Activated T-helper 1 cell treated with anti-CD3 and anti-CD28 coated beads, Interleukin-12 subunit alpha, Interleukin-12 subunit beta, Interleukin-2, Interleukin-4 antibody, amounts not matched to agents 30 ng/mL and 10 ng/mL and 1 ng/mL, durations not matched to agents 14 hours and 24 hours and 36 hours (primary cell): ENCODE measurements at regions of chr2 and their contacts with region 1.

Region 1: DNA sequence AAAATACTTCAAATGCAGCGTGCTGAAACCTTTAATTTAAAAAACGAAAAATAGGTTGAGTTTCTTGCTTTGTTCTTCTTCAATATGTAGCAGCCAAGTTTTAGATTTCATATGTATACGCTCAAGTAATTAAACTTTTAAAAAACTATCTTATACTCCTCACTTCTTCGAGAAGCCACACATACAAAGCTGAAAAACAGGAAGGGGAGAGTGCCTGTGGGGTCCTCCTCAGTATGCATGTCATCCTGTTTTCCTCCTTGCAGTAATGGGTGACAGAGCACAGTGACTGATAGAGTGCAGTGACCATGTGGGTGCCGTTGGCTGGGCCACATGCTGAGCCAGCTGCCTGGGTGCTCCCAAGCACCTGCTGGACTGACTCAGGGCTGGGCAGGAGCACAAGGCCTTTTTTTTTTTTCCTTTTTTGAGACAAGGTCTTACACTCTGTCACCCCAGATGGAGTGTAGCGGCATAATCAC is 33.3 kb downstream of the UXS1 start:
- DNase-seq: peak; percentile 22
- H3K4me3 Mint-ChIP-seq: peak overlapping the region; percentile 85
- H3K27ac Mint-ChIP-seq: peak overlapping the region; percentile 91
- H3K4me1 Mint-ChIP-seq: peaks cover 74% of the 10 kb centered on the region
- H3K27me3 Mint-ChIP-seq: no peaks in the 10 kb centered on the region

Region 2: GRCh38 chr2:106104332-106105062 is 56.3 kb before region 1 on chr2:
- intact Hi-C with region 1: loop called (anchors 1 kb)
- DNase-seq: peak; percentile 62
- H3K4me3 Mint-ChIP-seq: no peak overlapping the region
- H3K27ac Mint-ChIP-seq: peak overlapping the region; percentile 18
- H3K4me1 Mint-ChIP-seq: peaks cover 16% of the 10 kb centered on the region
- H3K27me3 Mint-ChIP-seq: no peaks in the 10 kb centered on the region

Region 3: GRCh38 chr2:106124905-106125405 is 35.9 kb before region 1 on chr2:
- intact Hi-C with region 1: loop called (anchors 5 kb)
- DNase-seq: no peak
- H3K4me3 Mint-ChIP-seq: no peak overlapping the region
- H3K27ac Mint-ChIP-seq: no peak overlapping the region
- H3K4me1 Mint-ChIP-seq: peaks cover 29% of the 10 kb centered on the region
- H3K27me3 Mint-ChIP-seq: no peaks in the 10 kb centered on the region

Region 4: GRCh38 chr2:106140913-106141312 is 19.9 kb before region 1 on chr2:
- intact Hi-C with region 1: loop called (anchors 1 kb)
- DNase-seq: no peak
- H3K4me3 Mint-ChIP-seq: peak overlapping the region; percentile 5
- H3K27ac Mint-ChIP-seq: peak overlapping the region; percentile 81
- H3K4me1 Mint-ChIP-seq: peaks cover 70% of the 10 kb centered on the region
- H3K27me3 Mint-ChIP-seq: no peaks in the 10 kb centered on the region

Region 5: DNA sequence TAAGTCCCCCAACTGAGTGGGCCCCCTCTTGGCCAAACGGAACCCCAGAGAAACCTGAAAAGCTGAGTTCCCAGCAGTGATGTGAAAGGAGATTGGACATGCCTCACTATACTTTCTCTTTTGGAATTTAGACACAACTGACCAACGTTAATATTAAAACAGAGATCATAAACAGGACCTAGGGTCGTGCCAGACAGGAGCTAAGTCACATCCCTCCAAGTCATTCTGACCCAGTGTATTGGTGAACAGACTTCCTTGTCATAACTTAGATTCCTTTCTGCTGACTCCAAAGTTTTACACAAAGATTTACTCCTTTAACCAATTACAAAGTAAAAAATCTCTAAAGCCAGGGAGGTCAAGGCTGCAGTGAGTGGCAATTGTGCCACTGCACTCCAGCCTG is 13.7 kb before region 1 on chr2:
- intact Hi-C with region 1: loop called (anchors 2 kb)
- DNase-seq: no peak
- H3K4me3 Mint-ChIP-seq: no peak overlapping the region
- H3K27ac Mint-ChIP-seq: peak overlapping the region; percentile 8
- H3K4me1 Mint-ChIP-seq: peaks cover 47% of the 10 kb centered on the region
- H3K27me3 Mint-ChIP-seq: no peaks in the 10 kb centered on the region

Region 6: DNA sequence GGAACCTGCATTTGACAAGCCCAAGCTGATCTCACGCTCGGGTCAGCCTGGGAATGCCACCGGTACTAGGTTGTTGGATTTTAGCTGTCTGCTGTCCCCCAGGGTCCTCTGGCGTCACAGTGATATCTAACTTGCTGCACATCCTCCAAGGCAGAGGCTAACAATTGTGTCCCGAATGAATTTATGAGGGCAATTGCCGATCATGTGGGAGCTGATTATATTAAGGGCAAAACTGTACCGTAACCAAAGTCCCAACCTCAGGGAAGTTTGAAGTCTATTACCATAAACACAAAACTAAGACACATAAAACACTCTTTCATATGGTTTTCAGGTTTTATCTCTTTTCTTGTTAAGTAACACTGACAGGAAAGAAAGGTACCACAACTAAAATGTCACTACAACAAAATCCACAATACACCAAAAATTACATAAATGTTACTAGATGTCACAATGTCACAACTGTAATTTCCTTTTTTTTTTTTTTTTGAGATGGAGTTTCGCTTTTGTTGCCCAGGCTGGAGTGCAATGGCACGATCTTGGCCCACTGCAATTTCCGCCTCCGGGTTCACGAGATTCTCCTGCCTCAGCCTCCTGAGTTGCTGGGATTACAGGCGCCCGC is 26.6 kb after region 1 on chr2:
- intact Hi-C with region 1: no loop called
- DNase-seq: no peak
- H3K4me3 Mint-ChIP-seq: no peak overlapping the region
- H3K27ac Mint-ChIP-seq: no peak overlapping the region
- H3K4me1 Mint-ChIP-seq: peaks cover 62% of the 10 kb centered on the region
- H3K27me3 Mint-ChIP-seq: no peaks in the 10 kb centered on the region